ENCODE measurements at regions of chr6 and their contacts with region 1.

Region 1: DNA sequence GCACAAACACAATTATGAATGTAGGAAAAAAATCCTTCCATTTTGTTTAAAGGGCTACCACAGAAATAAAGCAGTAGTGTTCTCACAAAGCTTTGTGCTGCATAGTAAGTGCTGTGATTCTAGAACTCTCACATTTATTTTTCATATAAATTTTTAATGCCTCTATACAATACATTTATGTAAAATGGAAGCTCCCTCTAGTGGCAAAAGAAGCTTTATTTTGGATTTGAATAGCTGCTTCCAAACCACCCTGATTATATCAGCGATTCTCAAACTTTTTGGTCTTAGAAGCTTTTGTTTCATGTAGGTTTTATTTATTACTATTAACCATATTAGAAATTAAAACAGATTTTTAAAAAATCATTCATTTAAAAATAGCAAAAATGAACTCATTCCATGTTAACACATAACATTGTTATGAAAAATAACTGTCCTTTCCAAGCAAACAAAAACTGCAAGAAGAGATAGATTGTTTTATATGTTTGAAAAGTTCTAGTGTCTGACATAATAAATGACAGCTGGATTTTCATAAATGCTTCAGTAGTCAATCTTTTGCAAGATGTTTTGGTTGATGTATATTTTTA is 38.4 kb downstream of the HS3ST5 start:
- DNase-seq: peak; percentile 19
- H3K4me3 ChIP-seq: no peak overlapping the region
- H3K27ac ChIP-seq: no peak overlapping the region
- H3K4me1 ChIP-seq: no peaks in the 10 kb centered on the region
- H3K27me3 ChIP-seq: no peaks in the 10 kb centered on the region
- CTCF ChIP-seq: peak; percentile 20 to 29
- POLR2A ChIP-seq: no peak

Region 2: GRCh38 chr6:113980937-113981554 is 323.4 kb before region 1 on chr6:
- CTCF ChIA-PET with region 1: interaction called, 61 read pairs
- POLR2A ChIA-PET with region 1: no interaction called
- dilution Hi-C with region 1: no loop called
- intact Hi-C with region 1: no loop called
- DNase-seq: peak; percentile 35
- H3K4me3 ChIP-seq: no peak overlapping the region
- H3K27ac ChIP-seq: no peak overlapping the region
- H3K4me1 ChIP-seq: no peaks in the 10 kb centered on the region
- H3K27me3 ChIP-seq: no peaks in the 10 kb centered on the region
- CTCF ChIP-seq: peak; percentile 59 to 71
- POLR2A ChIP-seq: no peak

Region 3: GRCh38 chr6:114288701-114289495 is 15.5 kb before region 1 on chr6:
- CTCF ChIA-PET with region 1: interaction called, 22 read pairs
- POLR2A ChIA-PET with region 1: no interaction called
- dilution Hi-C with region 1: no loop called
- intact Hi-C with region 1: no loop called
- DNase-seq: no peak
- H3K4me3 ChIP-seq: no peak overlapping the region
- H3K27ac ChIP-seq: no peak overlapping the region
- H3K4me1 ChIP-seq: no peaks in the 10 kb centered on the region
- H3K27me3 ChIP-seq: no peaks in the 10 kb centered on the region
- CTCF ChIP-seq: no peak
- POLR2A ChIP-seq: no peak

Region 4: DNA sequence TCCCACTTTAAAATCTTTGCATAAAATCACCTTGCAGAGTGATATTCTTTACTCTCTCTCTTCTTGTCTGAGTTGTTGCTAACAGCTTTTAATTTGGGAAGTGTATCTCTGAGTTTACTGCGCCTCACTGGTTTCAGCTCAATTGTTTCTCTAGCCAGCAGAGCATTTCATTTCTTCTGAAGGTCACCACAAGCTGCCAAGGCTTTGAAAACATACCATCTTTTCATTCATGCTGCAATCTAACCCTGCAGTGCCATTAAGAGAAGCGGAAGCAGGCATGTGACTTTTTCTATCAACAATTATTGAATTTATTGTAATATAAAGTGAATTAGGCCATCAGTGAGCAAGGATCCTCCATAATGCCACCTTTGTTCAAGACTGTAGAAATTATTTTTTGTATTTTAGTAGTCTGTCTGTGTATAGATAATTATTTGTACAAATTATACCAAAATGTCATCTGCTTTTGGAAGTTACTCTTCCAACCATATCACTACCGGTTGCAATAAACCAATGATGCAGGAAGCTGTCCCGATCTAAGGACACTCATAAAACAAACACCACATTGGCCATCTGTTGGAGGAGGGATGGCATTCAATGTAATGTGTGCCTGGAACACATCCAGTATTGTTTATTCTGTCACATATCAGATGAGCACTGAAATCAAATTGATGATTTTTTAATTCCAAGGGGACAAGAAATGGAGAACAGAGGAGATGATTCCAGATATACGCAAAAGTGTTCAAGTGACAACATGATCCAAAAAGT is 11.6 kb after region 1 on chr6:
- CTCF ChIA-PET with region 1: interaction called, 22 read pairs
- POLR2A ChIA-PET with region 1: no interaction called
- dilution Hi-C with region 1: no loop called
- intact Hi-C with region 1: no loop called
- DNase-seq: no peak
- H3K4me3 ChIP-seq: no peak overlapping the region
- H3K27ac ChIP-seq: no peak overlapping the region
- H3K4me1 ChIP-seq: no peaks in the 10 kb centered on the region
- H3K27me3 ChIP-seq: no peaks in the 10 kb centered on the region
- CTCF ChIP-seq: no peak
- POLR2A ChIP-seq: no peak